HepG2 (cell line): ENCODE measurements at regions of chr1 and their contacts with region 1.

Region 1: DNA sequence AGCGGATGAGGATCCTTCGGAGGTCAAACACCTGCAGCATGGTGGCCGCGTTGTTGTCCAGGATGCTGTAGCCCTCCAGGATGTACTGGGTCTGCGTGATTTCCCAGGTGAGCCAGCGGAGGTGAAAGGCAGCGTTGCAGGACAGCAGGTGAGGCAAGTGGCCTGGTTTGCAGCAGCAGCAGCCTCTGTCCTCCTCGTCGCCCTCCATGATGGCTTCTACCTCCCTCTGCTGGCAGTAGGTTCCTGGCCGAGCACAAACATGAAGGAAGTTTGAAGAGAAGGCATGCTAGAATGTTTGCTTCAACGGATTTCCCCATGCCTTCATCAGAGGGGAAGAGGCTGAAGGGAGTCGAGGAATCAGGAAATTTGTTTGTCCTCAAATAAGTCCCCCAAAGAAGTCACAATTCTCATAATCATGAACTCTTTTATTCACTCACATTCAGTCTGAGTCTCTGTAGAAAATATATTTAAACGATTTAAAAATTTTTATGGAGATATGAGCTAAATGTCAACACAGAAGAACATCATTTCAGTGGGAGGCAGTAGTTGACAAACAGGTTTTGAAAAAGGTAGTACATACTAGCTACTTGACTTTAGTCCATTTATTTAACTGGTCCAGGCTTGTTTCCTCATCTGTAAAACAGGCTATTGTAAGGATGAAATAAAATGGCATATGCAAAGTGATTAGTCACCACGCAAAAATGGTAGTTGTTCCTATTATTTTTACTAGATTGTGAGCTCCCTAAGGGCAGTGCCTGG is 74.9 kb downstream of the NTPCR start:
- DNase-seq: peak; percentile 18
- ATAC-seq: peak; percentile 84
- H3K4me3 ChIP-seq: no peak overlapping the region
- H3K27ac ChIP-seq: no peak overlapping the region
- H3K4me1 ChIP-seq: no peaks in the 10 kb centered on the region
- H3K27me3 ChIP-seq: peaks cover 5 to 19% of the 10 kb centered on the region in 2 experiments
- CTCF ChIP-seq: peak; percentile 74
- EP300 ChIP-seq: no peak
- POLR2A ChIP-seq: no peak
- RAD21 ChIP-seq: peak; percentile 50

Region 2: GRCh38 chr1:232578651-232579195 is 446.6 kb before region 1 on chr1:
- CTCF ChIA-PET with region 1: no interaction called
- POLR2A ChIA-PET with region 1: no interaction called
- in situ Hi-C with region 1: no loop called
- intact Hi-C with region 1: no loop called
- DNase-seq: no peak
- ATAC-seq: no peak
- H3K4me3 ChIP-seq: no peak overlapping the region
- H3K27ac ChIP-seq: no peak overlapping the region
- H3K4me1 ChIP-seq: no peaks in the 10 kb centered on the region
- H3K27me3 ChIP-seq: 0 out of 5 replicates have a peak, but pooled peaks cover 0 to 2% of the 10 kb centered on the region in 2 experiments
- CTCF ChIP-seq: no peak
- EP300 ChIP-seq: no peak
- POLR2A ChIP-seq: no peak
- RAD21 ChIP-seq: no peak

Region 3: GRCh38 chr1:232635778-232636356 is 389.5 kb before region 1 on chr1:
- CTCF ChIA-PET with region 1: interaction called, 11 read pairs
- POLR2A ChIA-PET with region 1: no interaction called
- in situ Hi-C with region 1: loop called (anchors 5 kb)
- intact Hi-C with region 1: no loop called
- DNase-seq: peak; percentile 23
- ATAC-seq: peak; percentile 75
- H3K4me3 ChIP-seq: no peak overlapping the region
- H3K27ac ChIP-seq: no peak overlapping the region
- H3K4me1 ChIP-seq: no peaks in the 10 kb centered on the region
- H3K27me3 ChIP-seq: peaks cover 0 to 19% of the 10 kb centered on the region in 2 experiments; a peak in 3 of 5 replicates
- CTCF ChIP-seq: peak; percentile 59
- EP300 ChIP-seq: no peak
- POLR2A ChIP-seq: no peak
- RAD21 ChIP-seq: 0 out of 2 replicates have a peak, but pooled peaks have one; percentile 26

Region 4: DNA sequence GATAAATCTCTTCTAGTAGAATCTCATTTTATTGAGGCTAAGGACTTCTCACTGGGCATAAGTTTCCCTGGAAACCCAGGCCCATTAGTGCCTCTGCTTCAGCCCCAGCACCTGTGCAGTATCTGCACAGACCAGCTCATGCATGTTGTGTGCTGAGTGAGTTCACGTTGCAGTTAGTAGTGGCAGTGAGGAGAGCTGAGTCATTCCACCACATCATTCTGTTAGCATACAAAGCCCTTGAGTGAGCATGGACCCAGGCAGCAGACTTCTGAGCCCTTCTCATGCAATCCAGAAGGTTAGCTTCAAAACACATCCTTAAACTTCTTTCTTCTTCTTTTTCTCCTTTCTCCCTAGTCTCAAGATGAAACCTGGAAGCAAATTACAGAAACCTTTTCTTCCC is 120.8 kb before region 1 on chr1:
- CTCF ChIA-PET with region 1: no interaction called
- POLR2A ChIA-PET with region 1: no interaction called
- in situ Hi-C with region 1: no loop called
- intact Hi-C with region 1: no loop called
- DNase-seq: no peak
- ATAC-seq: no peak
- H3K4me3 ChIP-seq: no peak overlapping the region
- H3K27ac ChIP-seq: no peak overlapping the region
- H3K4me1 ChIP-seq: no peaks in the 10 kb centered on the region
- H3K27me3 ChIP-seq: peaks cover 0 to 9% of the 10 kb centered on the region in 2 experiments; a peak in 3 of 5 replicates
- CTCF ChIP-seq: no peak
- EP300 ChIP-seq: no peak
- POLR2A ChIP-seq: no peak
- RAD21 ChIP-seq: no peak